ENCODE measurements at regions of chr22 and their contacts with region 1.

Region 1: DNA sequence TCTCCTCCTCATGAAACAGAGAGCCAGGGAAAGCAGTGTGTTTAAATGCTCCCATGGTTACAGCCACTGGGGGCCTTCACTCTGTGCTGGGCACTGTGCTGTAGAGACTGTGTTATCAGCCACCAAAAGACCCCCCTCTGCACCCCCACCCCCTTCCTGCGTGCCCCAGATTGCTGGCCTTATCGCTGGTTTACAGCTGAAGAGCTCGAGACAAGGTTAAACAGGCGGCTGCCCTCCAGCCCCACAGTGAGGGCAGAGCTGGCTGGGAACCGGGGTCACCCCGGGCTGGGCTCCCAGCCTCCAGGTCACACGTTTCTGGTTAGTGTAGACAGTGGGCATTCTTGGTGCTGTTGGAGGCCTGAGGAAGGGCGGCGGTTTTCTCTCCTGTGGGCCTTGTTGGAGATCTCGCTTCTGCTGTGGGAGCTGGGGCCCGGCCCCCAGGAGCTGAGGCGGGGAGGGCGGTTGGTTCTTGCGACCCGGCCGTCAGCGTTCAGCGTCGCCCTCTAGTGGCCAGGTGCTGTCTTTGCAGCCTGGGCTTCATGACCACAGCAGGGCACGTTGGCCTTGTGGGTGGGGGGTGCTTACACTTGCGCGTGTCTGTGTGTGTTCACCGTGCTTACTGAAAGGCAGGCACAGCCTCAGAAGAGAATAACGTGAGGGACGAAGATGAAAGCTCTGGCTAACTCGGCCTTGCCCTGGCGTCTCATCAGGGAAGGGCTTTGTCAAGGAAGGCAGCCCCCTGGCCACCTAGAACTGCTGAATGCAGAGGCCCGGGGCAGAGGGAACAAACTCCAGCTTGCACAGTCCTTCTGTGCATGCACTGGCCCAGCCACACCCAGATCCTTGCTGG is 40.8 kb downstream of the TBC1D22A start:
- DNase-seq: peak; percentile 89
- ATAC-seq: peak; percentile 50

Region 2: GRCh38 chr22:46762238-46763050 is 40.8 kb before region 1 on chr22 and contains the start of gene TBC1D22A:
- intact Hi-C with region 1: loop called (anchors 5 kb)
- DNase-seq: peak; percentile 98
- ATAC-seq: peak; percentile 95
- total RNA-seq, gene TBC1D22A: 14.6 TPM